Posterior cingulate gyrus (tissue), 11 donors: ENCODE measurements at regions of chr2 and their contacts with region 1.

Region 1: GRCh38 chr2:7825591-7826312 is 856.1 kb upstream of the ID2 start:
- DNase-seq: no peak

Region 2: DNA sequence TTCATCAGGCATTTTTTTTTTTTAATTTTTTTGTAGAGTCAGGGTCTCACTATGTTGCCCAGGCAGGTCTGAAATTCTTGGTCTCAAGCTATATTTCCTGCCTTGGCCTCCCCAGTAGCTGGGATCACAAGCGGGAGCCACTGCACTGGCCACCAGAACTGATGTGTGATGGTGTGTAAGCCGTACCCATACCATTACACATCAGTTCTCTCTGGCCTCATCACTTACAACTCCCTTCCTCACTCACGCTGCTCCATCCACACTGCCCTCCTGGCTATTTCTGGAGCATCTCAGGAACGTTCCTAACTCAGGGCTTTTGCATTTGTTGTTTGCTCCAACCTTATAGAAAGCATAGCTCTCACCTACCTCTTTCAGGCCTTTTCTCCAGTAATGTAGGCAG is 21.6 kb after region 1 on chr2:
- intact Hi-C with region 1: loop called (anchors 1 kb)
- DNase-seq: no peak